Right cardiac atrium (tissue), 5 donors: ENCODE measurements at regions of chrX and their contacts with region 1.

Region 1: GRCh38 chrX:77342004-77342403 is 105.2 kb upstream of the FGF16 start:
- DNase-seq: no peak
- ATAC-seq: no peak
- H3K4me3 ChIP-seq: no peak overlapping the region
- H3K27ac ChIP-seq: no peak overlapping the region
- H3K4me1 ChIP-seq: no peaks in the 10 kb centered on the region
- H3K27me3 ChIP-seq: no peaks in the 10 kb centered on the region

Region 2: DNA sequence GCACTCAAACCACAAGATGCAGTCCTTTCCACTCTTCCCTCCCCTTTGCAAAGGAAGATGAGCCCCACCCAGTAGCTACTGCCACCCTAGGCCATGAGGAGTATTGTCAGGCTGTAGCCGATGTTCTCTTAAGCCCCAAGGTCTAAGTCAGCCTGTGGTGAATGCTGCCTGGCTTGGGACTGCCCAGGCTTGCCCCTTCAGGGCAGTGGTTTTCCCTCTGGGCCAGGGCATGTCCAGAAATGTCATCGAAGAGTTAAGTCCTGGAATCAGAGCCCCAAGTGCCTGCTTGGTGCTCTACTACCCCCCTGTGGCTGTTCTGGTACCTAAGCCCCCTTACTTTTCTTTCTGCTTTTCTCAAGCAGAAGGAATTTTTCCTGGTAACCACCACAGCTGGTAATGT is 750.3 kb after region 1 on chrX:
- intact Hi-C with region 1: loop called in 1 of 4 experiments (anchors 10 kb)
- DNase-seq: no peak
- ATAC-seq: no peak
- H3K4me3 ChIP-seq: no peak overlapping the region
- H3K27ac ChIP-seq: no peak overlapping the region
- H3K4me1 ChIP-seq: no peaks in the 10 kb centered on the region
- H3K27me3 ChIP-seq: no peaks in the 10 kb centered on the region